Lower leg skin (tissue), 4 donors: ENCODE measurements at regions of chr13 and their contacts with region 1.

Region 1: DNA sequence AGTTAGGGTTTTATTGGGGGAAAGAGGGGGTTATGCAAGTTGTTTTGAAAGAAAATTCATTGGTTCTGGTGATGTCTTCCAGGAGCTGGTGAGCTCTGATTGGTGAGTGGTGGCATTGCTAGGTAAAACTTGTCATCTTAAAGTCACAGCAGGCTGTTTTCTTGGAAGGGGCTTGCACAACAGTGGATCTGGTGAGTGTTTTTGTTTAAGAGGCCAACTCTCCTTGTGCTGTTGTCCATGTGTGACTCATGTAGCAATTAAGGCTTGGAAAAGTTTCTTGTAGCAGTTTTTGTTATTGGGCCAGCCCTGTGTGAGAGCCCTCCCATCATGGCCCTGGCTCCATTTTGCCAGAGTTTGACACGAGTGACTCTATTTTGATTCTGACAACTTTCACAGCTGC is 109.4 kb downstream of the RFC3 start:
- DNase-seq: peak in 1 of 2 donors; percentile 27
- H3K4me3 ChIP-seq: no peak overlapping the region
- CTCF ChIP-seq: no peak
- POLR2A ChIP-seq: no peak

Region 2: DNA sequence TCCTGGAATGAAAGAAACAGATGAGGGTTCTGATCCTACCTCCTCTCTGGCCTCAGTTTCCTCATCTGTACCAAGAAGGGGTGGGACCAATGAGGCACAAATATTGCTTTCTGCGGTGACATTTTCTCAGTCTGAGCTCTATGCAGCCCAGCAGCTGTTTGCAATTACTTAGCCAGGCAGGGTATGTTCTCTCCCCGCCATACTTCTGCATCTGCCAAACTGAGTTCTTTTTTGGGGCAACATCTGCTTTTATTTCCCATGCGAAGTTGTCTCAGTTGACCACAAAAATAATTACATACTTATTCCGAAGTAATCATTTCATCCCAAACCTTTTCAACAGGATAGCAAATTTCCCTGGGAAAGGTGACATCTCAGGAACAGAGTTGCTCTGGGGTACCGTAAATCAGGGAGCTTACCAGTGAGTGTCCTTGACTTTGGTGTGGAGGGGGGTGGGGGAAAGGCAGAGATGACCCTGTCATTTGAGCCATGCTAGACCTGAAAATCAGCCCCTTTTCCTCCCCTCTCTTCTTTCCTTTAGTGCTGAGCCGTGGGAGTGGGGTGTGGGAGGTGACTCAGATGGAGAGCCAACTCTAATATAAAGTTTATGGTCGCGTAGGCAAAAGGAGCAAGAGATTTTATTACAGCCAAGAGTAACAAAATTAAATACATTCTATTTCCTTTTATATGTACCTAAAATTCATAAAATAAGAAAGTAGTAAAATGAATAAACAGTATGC is 1076.8 kb before region 1 on chr13:
- intact Hi-C with region 1: no loop called
- DNase-seq: no peak
- H3K4me3 ChIP-seq: no peak overlapping the region
- CTCF ChIP-seq: no peak
- POLR2A ChIP-seq: no peak

Region 3: GRCh38 chr13:33494596-33495204 is 432.6 kb before region 1 on chr13:
- intact Hi-C with region 1: no loop called
- DNase-seq: no peak
- H3K4me3 ChIP-seq: no peak overlapping the region
- CTCF ChIP-seq: no peak
- POLR2A ChIP-seq: no peak

Region 4: GRCh38 chr13:35164324-35164932 is 1237.1 kb after region 1 on chr13:
- intact Hi-C with region 1: loop called (anchors 10 kb)
- DNase-seq: no peak
- H3K4me3 ChIP-seq: no peak overlapping the region
- CTCF ChIP-seq: no peak
- POLR2A ChIP-seq: no peak